Endothelial cell of umbilical vein (primary cell): ENCODE measurements at regions of chr5 and their contacts with region 1.

Region 1: DNA sequence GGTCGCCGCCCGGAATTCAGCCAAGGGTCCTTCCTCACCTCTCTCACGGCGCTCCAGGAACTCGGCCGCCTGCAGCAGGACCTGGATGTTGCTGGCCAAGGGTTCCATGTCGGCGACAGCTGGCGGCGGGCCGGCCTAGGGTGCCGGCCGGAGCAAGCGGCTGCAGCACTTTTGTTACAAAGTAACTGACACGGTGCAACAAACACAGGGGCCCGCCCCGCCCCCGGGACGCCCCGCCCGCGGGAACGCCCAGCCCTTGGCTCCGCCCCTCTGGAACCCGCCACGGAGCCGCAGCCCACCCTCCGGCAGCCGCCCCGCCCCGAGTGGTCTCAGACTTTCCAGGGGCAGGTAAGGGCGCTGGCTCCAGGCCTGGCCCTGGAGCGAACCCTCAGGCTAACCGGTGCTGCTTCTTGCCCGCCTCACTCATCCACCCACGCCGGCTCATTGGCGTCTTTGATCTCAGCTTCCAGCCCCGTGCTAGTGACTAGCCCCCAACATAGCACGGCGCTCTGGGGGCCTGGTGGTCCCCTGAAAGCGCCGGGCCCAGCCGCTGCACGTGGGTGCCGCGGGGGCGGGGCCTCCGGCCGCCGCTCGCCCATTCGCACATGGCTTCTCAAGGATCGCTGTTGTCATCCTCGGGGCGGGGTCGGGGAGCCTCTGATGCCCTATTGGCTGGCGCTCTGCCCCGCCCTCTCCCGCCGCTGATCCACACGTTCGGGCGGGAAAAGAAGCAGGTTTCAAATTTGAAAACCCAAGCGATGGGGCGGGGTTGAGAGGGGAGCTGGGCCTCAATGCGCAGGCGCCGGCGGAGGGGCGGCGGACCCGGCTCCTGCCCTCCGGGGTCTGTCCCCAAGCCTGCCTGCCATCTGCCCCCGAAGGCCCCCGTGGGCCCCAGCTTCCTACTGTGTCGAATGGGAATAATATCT is at the start of gene MXD3:
- DNase-seq: peak; percentile 92
- H3K4me3 ChIP-seq: peak within 1 kb of the TSS; percentile 49 to 64 (median 58)
- H3K27ac ChIP-seq: peak within 1 kb of the TSS; percentile 78
- H3K4me1 ChIP-seq: peaks cover 22% of the 10 kb centered on the region
- H3K27me3 ChIP-seq: no peaks in the 10 kb centered on the region
- CTCF ChIP-seq: no peak
- POLR2A ChIP-seq: peak; percentile 63
- total RNA-seq, gene MXD3: 30.5 and 44.2 TPM in 2 replicates

Region 2: GRCh38 chr5:176653401-176654385 is 658.3 kb before region 1 on chr5:
- CTCF ChIA-PET with region 1: no interaction called
- POLR2A ChIA-PET with region 1: no interaction called
- dilution Hi-C with region 1: no loop called
- intact Hi-C with region 1: loop called (anchors 5 kb)
- DNase-seq: no peak
- H3K4me3 ChIP-seq: no peak overlapping the region
- H3K27ac ChIP-seq: no peak overlapping the region
- H3K4me1 ChIP-seq: no peaks in the 10 kb centered on the region
- H3K27me3 ChIP-seq: no peaks in the 10 kb centered on the region
- CTCF ChIP-seq: no peak
- POLR2A ChIP-seq: no peak

Region 3: GRCh38 chr5:177327539-177328522 is 15.8 kb after region 1 on chr5:
- CTCF ChIA-PET with region 1: interaction called, 15 read pairs
- POLR2A ChIA-PET with region 1: no interaction called
- dilution Hi-C with region 1: no loop called
- intact Hi-C with region 1: no loop called
- DNase-seq: peak; percentile 79
- H3K4me3 ChIP-seq: peak overlapping the region in 1 of 3 experiments; percentile 36
- H3K27ac ChIP-seq: peak overlapping the region; percentile 77
- H3K4me1 ChIP-seq: peaks cover 22% of the 10 kb centered on the region
- H3K27me3 ChIP-seq: no peaks in the 10 kb centered on the region
- CTCF ChIP-seq: no peak
- POLR2A ChIP-seq: peak; percentile 50

Region 4: GRCh38 chr5:177351385-177352329 is 39.7 kb after region 1 on chr5 and contains the start of gene LMAN2:
- CTCF ChIA-PET with region 1: interaction called, 10 read pairs
- POLR2A ChIA-PET with region 1: interaction called, 4 read pairs
- dilution Hi-C with region 1: no loop called
- intact Hi-C with region 1: loop called (anchors 2 kb)
- DNase-seq: peak; percentile 97
- H3K4me3 ChIP-seq: peak within 1 kb of the TSS; percentile 29 to 95 (median 61)
- H3K27ac ChIP-seq: peak within 1 kb of the TSS; percentile 77
- H3K4me1 ChIP-seq: peaks cover 21% of the 10 kb centered on the region
- H3K27me3 ChIP-seq: no peaks in the 10 kb centered on the region
- CTCF ChIP-seq: no peak
- POLR2A ChIP-seq: peak; percentile 77
- total RNA-seq, gene LMAN2: 151 and 160 TPM in 2 replicates

Region 5: GRCh38 chr5:177362610-177363507 is 50.9 kb after region 1 on chr5:
- CTCF ChIA-PET with region 1: interaction called, 19 read pairs
- POLR2A ChIA-PET with region 1: no interaction called
- dilution Hi-C with region 1: no loop called
- intact Hi-C with region 1: loop called (anchors 5 kb)
- DNase-seq: peak; percentile 53
- H3K4me3 ChIP-seq: peak overlapping the region in 2 of 3 experiments; percentile 17 to 24
- H3K27ac ChIP-seq: no peak overlapping the region
- H3K4me1 ChIP-seq: peaks cover 25% of the 10 kb centered on the region
- H3K27me3 ChIP-seq: no peaks in the 10 kb centered on the region
- CTCF ChIP-seq: no peak
- POLR2A ChIP-seq: no peak

Region 6: GRCh38 chr5:177382423-177383029 is 70.5 kb after region 1 on chr5:
- CTCF ChIA-PET with region 1: interaction called, 44 read pairs
- POLR2A ChIA-PET with region 1: no interaction called
- dilution Hi-C with region 1: no loop called
- intact Hi-C with region 1: no loop called
- DNase-seq: peak; percentile 37
- H3K4me3 ChIP-seq: no peak overlapping the region
- H3K27ac ChIP-seq: no peak overlapping the region
- H3K4me1 ChIP-seq: no peaks in the 10 kb centered on the region
- H3K27me3 ChIP-seq: peaks cover 0 to 4% of the 10 kb centered on the region in 2 experiments
- CTCF ChIP-seq: peak in 1 of 2 donors; percentile 58
- POLR2A ChIP-seq: no peak